Right ventricle myocardium superior (tissue), 1 donor: ENCODE measurements at regions of chr10 and their contacts with region 1.

Region 1: GRCh38 chr10:93376372-93377293 is 105.5 kb downstream of the MYOF start:
- DNase-seq: no peak
- ATAC-seq: peak; percentile 97

Region 2: GRCh38 chr10:93452143-93452542 is 75.5 kb after region 1 on chr10:
- intact Hi-C with region 1: no loop called
- DNase-seq: no peak
- ATAC-seq: no peak

Region 3: DNA sequence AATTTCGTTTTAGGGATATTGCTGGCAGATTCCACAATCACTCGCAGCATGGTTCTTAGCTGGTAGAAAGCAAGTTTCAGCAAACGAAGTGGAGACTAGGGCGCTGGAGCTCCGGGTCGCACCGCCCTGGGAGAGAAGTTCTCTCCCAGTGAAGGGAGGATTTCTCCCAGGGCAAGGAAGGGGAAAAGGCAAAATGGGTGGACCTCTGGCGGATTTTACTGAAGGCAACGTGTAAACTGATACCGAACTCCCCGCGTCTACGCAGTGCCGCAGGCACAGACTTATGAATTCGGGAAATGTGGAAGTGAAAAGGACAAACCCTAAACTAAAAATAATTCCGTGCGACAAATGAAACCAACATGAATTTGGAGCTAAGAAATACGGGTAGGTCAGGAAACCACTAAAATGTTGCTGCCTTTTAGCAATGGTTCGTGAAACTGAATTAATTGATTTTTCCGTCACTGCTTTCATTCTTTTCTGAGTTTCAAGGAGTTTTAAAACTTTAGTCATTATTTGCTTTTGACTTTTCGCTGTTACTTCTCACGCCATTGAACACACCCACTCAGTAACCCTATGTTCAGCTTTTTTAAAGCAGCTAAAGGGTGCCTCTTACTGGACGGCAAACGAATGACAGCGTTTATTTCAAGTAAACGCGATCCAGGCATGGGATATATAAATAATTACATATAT is 105.7 kb after region 1 on chr10 and contains the start of gene MYOF:
- intact Hi-C with region 1: loop called (anchors 2 kb)
- DNase-seq: peak; percentile 60
- ATAC-seq: peak; percentile 95
- total RNA-seq, gene MYOF: 30.4 TPM